Activated naive CD4-positive, alpha-beta T cell treated with anti-CD3 and anti-CD28 coated beads for 36 hours (primary cell): ENCODE measurements at regions of chr14 and their contacts with region 1.

Region 1: DNA sequence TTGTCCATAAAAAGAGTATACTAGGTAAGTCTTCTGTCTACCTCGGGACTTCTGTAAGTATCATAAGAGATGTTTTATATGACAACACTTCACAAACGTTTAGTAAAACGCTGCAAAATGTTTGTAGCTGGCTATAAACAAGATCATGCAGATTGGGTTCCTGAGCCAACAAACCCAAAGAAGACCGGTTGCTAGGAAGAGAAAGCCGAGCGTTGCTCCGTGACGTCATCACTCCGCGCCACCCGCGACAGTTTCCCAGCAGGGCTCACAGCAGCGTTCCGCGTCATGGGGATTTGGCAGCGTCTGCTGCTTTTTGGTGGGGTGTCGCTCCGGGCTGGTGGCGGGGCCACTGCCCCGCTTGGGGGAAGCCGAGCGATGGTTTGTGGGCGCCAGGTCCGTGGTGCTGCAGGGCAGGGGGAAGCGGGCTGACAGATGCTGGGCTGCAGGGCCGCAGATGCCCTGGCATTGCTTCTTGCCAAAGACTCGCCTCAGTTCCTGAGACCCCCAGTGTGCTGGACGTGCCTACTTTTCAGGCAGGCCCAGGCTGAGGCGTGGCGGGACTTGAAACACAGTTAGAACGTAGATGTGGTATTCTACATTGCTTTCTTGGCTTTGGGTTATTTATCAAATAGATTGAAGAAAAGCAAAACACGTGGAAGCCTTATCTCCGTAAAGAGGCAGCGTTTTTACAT is at the start of gene NUBPL:
- DNase-seq: peak; percentile 98
- H3K4me3 Mint-ChIP-seq: peak within 1 kb of the TSS; percentile 96
- H3K27ac Mint-ChIP-seq: peak within 1 kb of the TSS; percentile 92
- H3K4me1 Mint-ChIP-seq: peaks cover 23% of the 10 kb centered on the region
- H3K27me3 Mint-ChIP-seq: no peaks in the 10 kb centered on the region
- total RNA-seq, gene NUBPL: 11.5 to 13.5 TPM

Region 2: DNA sequence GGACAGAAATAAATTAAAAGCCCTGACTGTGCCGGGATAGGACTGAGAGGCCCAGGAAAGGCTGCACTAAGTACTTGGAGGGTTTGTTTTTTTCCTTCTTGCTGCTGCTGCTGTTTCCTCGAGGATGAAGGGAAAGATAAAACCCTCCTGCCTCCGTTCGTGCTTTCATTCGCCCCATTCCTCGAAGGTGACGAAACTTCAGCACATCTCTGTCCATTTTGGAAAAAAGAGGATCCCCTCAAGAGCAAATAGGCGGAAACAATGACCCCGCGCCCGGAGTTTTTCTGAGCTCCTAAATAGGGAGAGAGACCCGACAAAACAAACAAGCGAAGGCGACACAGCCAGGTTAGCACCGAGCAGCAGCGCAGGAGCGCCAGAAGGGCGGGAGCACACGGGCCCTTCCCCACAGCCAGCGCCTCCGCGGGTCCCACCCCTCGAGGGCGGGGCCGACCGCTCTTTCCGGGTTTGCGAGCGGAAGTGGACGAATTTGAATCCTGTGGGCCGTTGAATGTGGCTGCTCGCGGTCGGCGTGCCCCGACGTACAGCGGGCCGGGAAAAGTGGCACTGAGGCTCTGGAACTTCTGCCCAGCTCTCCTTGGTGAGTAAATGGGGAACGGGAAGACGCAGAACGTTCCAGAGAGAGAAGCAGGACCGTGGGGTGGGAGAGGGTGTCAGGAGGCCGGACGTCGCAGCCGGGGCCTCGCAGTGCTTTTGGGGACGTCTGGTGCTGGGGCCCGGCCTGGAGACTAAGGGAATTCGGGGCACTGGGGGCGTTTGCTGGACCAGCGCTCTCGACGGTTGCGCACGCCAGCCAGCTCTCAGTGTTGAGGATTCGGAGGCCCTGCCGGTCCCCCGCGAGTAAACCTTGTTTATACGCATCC is 1002.4 kb before region 1 on chr14 and contains the start of gene G2E3:
- CTCF ChIA-PET with region 1: no interaction called
- intact Hi-C with region 1: loop called (anchors 1 kb)
- DNase-seq: peak; percentile 92
- H3K4me3 Mint-ChIP-seq: peak within 1 kb of the TSS; percentile 100
- H3K27ac Mint-ChIP-seq: peak within 1 kb of the TSS; percentile 99
- H3K4me1 Mint-ChIP-seq: peaks cover 30% of the 10 kb centered on the region
- H3K27me3 Mint-ChIP-seq: no peaks in the 10 kb centered on the region
- total RNA-seq, gene G2E3: 28.6 to 29.1 TPM

Region 3: DNA sequence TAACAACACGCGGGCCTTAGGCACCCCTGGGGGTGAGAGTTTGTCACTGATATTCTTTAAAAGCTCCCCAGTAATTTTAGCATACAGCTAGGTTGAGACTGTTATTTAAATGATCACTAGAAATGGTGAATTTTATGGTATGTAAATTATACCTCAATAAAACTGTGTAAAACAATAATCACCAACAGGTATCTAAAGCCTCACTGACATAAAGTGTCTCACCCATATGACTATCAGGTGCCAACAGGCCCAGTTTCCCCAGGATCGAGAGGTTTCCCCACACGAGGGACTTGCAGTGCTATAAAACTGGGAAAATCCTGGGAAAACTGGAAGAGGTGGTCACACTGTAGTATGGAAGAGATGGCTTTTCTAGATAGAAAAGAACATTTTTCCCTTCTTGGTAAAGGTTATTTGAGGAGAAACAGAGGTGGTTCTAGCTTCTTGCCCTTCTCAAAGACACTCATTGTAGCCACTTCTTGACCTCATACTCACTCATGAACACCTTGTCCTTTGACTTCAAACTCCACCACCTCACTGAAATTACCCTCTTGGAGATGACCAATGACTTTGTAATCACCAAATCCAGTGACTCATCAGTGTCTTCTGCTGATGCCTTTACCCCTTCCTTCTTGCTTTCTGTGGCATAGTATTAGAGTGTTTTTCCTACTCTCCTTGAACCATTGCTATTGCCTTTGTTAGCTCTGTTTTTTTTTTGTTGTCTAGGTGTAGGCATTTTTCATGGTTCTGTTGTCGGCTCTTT is 24.9 kb before region 1 on chr14:
- CTCF ChIA-PET with region 1: no interaction called
- intact Hi-C with region 1: no loop called
- DNase-seq: no peak
- H3K4me3 Mint-ChIP-seq: no peak overlapping the region
- H3K27ac Mint-ChIP-seq: no peak overlapping the region
- H3K4me1 Mint-ChIP-seq: no peaks in the 10 kb centered on the region
- H3K27me3 Mint-ChIP-seq: peaks cover 8% of the 10 kb centered on the region

Region 4: GRCh38 chr14:32826404-32827082 is 1265.2 kb after region 1 on chr14:
- CTCF ChIA-PET with region 1: no interaction called
- intact Hi-C with region 1: no loop called
- DNase-seq: no peak
- H3K4me3 Mint-ChIP-seq: no peak overlapping the region
- H3K27ac Mint-ChIP-seq: no peak overlapping the region
- H3K4me1 Mint-ChIP-seq: no peaks in the 10 kb centered on the region
- H3K27me3 Mint-ChIP-seq: no peaks in the 10 kb centered on the region